Mammary epithelial cell (primary cell): ENCODE measurements at regions of chr11 and their contacts with region 1.

Region 1: GRCh38 chr11:1401656-1402221 is 12.0 kb downstream of the BRSK2 start:
- DNase-seq: peak; percentile 34
- H3K4me3 ChIP-seq: no peak overlapping the region
- H3K27ac ChIP-seq: no peak overlapping the region
- H3K4me1 ChIP-seq: no peaks in the 10 kb centered on the region
- H3K27me3 ChIP-seq: no peaks in the 10 kb centered on the region
- CTCF ChIP-seq: no peak

Region 2: DNA sequence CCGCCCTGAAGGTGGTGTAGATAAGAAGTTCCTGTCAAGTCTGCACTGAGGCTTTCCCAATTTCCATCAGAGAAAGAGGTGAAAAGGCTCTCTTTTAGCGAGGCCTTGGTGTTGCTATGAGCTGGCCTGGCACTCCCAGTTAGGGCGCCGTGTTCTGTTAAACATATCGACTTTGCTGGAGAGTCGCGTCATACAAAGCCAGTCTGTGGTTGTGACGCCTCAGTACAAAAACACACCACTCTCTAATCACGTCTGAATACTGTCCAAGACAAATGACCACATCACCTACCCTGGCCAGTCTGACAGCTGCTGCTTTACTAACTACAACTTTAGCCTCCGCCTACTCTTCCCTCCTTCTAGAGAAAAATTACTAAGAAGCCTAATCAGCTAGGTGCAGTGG is 84.3 kb before region 1 on chr11:
- CTCF ChIA-PET with region 1: no interaction called
- dilution Hi-C with region 1: loop called (anchors 5 kb)
- in situ Hi-C with region 1: no loop called
- intact Hi-C with region 1: no loop called
- DNase-seq: no peak
- H3K4me3 ChIP-seq: no peak overlapping the region
- H3K27ac ChIP-seq: no peak overlapping the region
- H3K4me1 ChIP-seq: no peaks in the 10 kb centered on the region
- H3K27me3 ChIP-seq: no peaks in the 10 kb centered on the region
- CTCF ChIP-seq: no peak

Region 3: GRCh38 chr11:1468002-1468401 is 66.3 kb after region 1 on chr11:
- CTCF ChIA-PET with region 1: no interaction called
- dilution Hi-C with region 1: no loop called
- in situ Hi-C with region 1: no loop called
- intact Hi-C with region 1: no loop called
- DNase-seq: no peak
- H3K4me3 ChIP-seq: no peak overlapping the region
- H3K27ac ChIP-seq: no peak overlapping the region
- H3K4me1 ChIP-seq: peaks cover 7% of the 10 kb centered on the region
- H3K27me3 ChIP-seq: no peaks in the 10 kb centered on the region
- CTCF ChIP-seq: no peak

Region 4: GRCh38 chr11:1478544-1478943 is 76.8 kb after region 1 on chr11:
- CTCF ChIA-PET with region 1: no interaction called
- dilution Hi-C with region 1: loop called (anchors 5 kb)
- in situ Hi-C with region 1: no loop called
- intact Hi-C with region 1: no loop called
- DNase-seq: no peak
- H3K4me3 ChIP-seq: no peak overlapping the region
- H3K27ac ChIP-seq: no peak overlapping the region
- H3K4me1 ChIP-seq: no peaks in the 10 kb centered on the region
- H3K27me3 ChIP-seq: no peaks in the 10 kb centered on the region
- CTCF ChIP-seq: no peak

Region 5: DNA sequence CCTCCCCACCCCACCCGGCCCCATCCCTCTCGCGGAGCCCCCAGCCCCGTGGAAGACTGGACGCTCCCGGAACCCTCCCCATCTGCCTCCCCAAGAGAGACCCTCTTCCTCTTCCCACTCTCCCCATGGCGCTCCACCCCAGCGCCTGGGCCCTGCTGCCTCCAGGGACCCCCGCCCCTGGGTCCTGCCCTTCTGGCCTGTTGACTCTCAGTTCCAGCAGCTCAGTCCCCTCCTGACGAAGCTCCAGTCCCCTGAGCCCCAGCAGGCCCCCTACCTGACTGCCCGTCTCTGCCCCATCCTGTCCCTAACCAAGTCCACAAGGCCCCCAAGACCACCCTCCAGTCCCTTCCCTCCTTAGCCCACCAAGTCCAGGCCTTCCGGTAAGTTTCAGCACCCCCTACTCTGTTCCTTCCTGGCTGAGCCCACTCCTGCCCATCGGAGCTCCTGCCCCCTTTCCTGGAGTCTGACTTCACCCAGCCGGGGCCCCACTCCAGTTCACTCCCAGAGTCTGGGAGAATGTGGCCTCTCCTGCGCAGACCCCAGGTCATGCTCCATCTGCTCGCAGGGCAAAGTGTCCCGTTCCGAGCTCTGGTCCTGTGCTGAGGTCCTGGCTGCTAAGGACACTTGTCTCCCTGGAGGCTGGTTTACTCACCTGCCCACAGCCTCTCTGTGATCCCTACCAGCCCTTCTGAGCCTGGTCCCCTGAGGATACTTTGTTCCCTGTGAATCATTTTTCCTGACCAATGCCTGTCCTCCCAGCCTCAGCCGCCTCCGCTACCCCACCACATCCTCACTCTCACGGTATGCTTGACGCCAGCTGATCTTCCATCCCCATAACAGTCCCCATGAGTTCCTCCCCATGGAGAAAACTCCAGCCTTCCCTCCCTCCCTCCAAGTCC is 347.9 kb after region 1 on chr11:
- CTCF ChIA-PET with region 1: no interaction called
- dilution Hi-C with region 1: no loop called
- in situ Hi-C with region 1: no loop called
- intact Hi-C with region 1: no loop called
- DNase-seq: peak; percentile 92
- H3K4me3 ChIP-seq: peak overlapping the region; percentile 52 to 74 (median 67)
- H3K27ac ChIP-seq: peak overlapping the region; percentile 54
- H3K4me1 ChIP-seq: peaks cover 59% of the 10 kb centered on the region
- H3K27me3 ChIP-seq: no peaks in the 10 kb centered on the region
- CTCF ChIP-seq: no peak